Caco-2 (cell line): ENCODE measurements at regions of chr7 and their contacts with region 1.

Region 1: GRCh38 chr7:13017333-13017853 is 330.0 kb downstream of the ARL4A start:
- DNase-seq: peak; percentile 87 to 91
- H3K4me3 ChIP-seq: peak overlapping the region; percentile 37
- H3K4me3 Mint-ChIP-seq: peak overlapping the region; percentile 78
- H3K27ac Mint-ChIP-seq: peak overlapping the region; percentile 69
- H3K4me1 ChIP-seq: peaks cover 76% of the 10 kb centered on the region
- H3K4me1 Mint-ChIP-seq: peaks cover 36% of the 10 kb centered on the region
- H3K27me3 ChIP-seq: no peaks in the 10 kb centered on the region
- H3K27me3 Mint-ChIP-seq: no peaks in the 10 kb centered on the region
- CTCF ChIP-seq: no peak

Region 2: GRCh38 chr7:12643644-12644043 is 373.7 kb before region 1 on chr7:
- CTCF ChIA-PET with region 1: no interaction called
- POLR2A ChIA-PET with region 1: no interaction called
- intact Hi-C with region 1: loop called (anchors 2 kb)
- DNase-seq: no peak
- H3K4me3 ChIP-seq: no peak overlapping the region
- H3K4me3 Mint-ChIP-seq: no peak overlapping the region
- H3K27ac Mint-ChIP-seq: no peak overlapping the region
- H3K4me1 ChIP-seq: peaks cover 23% of the 10 kb centered on the region
- H3K4me1 Mint-ChIP-seq: peaks cover 8% of the 10 kb centered on the region
- H3K27me3 ChIP-seq: no peaks in the 10 kb centered on the region
- H3K27me3 Mint-ChIP-seq: no peaks in the 10 kb centered on the region
- CTCF ChIP-seq: no peak

Region 3: DNA sequence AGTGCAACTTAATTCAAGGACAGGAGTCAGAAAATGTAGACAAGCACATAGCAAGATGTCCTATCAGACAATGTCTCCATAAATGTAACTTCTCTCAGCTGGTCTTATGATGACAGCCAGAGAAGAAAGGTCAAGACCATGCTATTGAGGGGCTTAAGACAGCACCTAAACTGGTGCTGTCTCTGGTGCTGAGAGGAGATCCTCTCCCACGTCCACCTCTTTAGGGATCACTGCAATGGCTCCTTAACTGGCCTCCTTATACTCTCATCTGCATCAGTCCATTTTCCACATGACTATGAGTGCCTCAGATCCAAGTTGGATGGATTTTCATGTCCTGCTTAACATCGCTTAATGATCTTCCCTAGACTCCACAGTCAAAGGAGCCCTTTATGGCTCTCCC is 119.4 kb before region 1 on chr7:
- CTCF ChIA-PET with region 1: no interaction called
- POLR2A ChIA-PET with region 1: no interaction called
- intact Hi-C with region 1: loop called (anchors 1 kb)
- DNase-seq: no peak
- H3K4me3 ChIP-seq: no peak overlapping the region
- H3K4me3 Mint-ChIP-seq: no peak overlapping the region
- H3K27ac Mint-ChIP-seq: no peak overlapping the region
- H3K4me1 ChIP-seq: peaks cover 17% of the 10 kb centered on the region
- H3K4me1 Mint-ChIP-seq: peaks cover 20% of the 10 kb centered on the region
- H3K27me3 ChIP-seq: no peaks in the 10 kb centered on the region
- H3K27me3 Mint-ChIP-seq: no peaks in the 10 kb centered on the region
- CTCF ChIP-seq: no peak

Region 4: GRCh38 chr7:12985228-12985627 is 32.2 kb before region 1 on chr7:
- CTCF ChIA-PET with region 1: no interaction called
- POLR2A ChIA-PET with region 1: no interaction called
- intact Hi-C with region 1: loop called (anchors 2 kb)
- DNase-seq: no peak
- H3K4me3 ChIP-seq: no peak overlapping the region
- H3K4me3 Mint-ChIP-seq: no peak overlapping the region
- H3K27ac Mint-ChIP-seq: no peak overlapping the region
- H3K4me1 ChIP-seq: no peaks in the 10 kb centered on the region; the same call in 1 of the 2 replicates
- H3K4me1 Mint-ChIP-seq: peaks cover 20% of the 10 kb centered on the region
- H3K27me3 ChIP-seq: no peaks in the 10 kb centered on the region
- H3K27me3 Mint-ChIP-seq: no peaks in the 10 kb centered on the region
- CTCF ChIP-seq: no peak

Region 5: GRCh38 chr7:13099154-13099795 is 81.9 kb after region 1 on chr7:
- CTCF ChIA-PET with region 1: no interaction called
- POLR2A ChIA-PET with region 1: no interaction called
- intact Hi-C with region 1: no loop called
- DNase-seq: no peak
- H3K4me3 ChIP-seq: no peak overlapping the region
- H3K4me3 Mint-ChIP-seq: no peak overlapping the region
- H3K27ac Mint-ChIP-seq: no peak overlapping the region
- H3K4me1 ChIP-seq: no peaks in the 10 kb centered on the region
- H3K4me1 Mint-ChIP-seq: peaks cover 1% of the 10 kb centered on the region
- H3K27me3 ChIP-seq: no peaks in the 10 kb centered on the region
- H3K27me3 Mint-ChIP-seq: no peaks in the 10 kb centered on the region
- CTCF ChIP-seq: no peak

Region 6: DNA sequence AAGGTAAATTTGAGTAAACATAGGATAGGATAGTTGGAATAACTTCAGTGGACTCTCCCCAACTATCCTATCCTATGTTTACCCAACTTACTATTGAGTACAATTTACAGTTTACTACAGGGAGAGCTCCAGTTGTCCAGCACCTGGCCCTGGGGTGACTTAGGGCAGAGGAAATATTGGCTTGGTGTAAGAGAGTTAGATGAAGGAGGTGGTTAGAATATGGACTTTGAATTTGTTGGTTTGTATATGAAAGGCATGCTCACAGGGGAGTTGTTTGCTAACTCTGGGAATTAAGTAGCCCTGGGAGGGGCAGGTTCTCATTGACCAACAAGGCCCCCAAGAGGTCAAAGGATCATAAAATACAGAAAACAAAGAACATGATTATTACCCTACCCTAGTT is 167.7 kb after region 1 on chr7:
- CTCF ChIA-PET with region 1: interaction called, 3 read pairs
- POLR2A ChIA-PET with region 1: no interaction called
- intact Hi-C with region 1: loop called (anchors 1 kb)
- DNase-seq: peak; percentile 65 to 83
- H3K4me3 ChIP-seq: no peak overlapping the region
- H3K4me3 Mint-ChIP-seq: no peak overlapping the region
- H3K27ac Mint-ChIP-seq: peak overlapping the region; percentile 89
- H3K4me1 ChIP-seq: peaks cover 20% of the 10 kb centered on the region; the same call in 1 of the 2 replicates
- H3K4me1 Mint-ChIP-seq: peaks cover 15% of the 10 kb centered on the region
- H3K27me3 ChIP-seq: no peaks in the 10 kb centered on the region
- H3K27me3 Mint-ChIP-seq: no peaks in the 10 kb centered on the region
- CTCF ChIP-seq: no peak